ENCODE measurements at regions of chr5 and their contacts with region 1.

Region 1: DNA sequence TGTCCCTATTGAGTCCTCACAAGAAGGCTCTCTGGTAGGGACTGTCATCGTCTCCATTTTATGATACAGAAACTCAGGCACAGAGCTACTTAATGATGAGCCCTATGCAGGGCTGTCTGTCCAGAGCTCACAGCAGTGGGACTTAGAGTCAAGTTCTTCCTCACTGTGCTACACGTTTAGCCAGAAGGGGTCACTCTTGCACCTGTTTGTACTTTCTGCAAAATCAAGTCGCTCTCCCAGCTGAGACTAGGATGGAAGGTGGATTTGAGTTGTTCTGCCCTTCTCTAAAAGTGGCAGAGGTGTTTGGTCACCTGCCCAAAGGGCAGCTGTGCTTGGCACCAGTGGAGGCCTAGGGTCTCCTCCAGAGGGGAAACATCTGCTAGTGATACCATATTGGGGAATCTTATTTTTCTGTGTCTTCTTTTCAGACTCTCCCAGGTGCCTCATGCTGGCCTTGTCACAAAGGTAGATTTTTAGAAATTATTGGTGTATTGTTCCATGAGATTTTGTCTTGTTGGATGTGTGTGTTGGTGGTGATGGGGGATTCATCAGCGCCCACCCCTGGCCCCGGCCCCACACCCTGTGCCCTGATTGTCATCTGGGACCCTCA is 104.2 kb downstream of the PPARGC1B start:
- DNase-seq: no peak

Region 2: DNA sequence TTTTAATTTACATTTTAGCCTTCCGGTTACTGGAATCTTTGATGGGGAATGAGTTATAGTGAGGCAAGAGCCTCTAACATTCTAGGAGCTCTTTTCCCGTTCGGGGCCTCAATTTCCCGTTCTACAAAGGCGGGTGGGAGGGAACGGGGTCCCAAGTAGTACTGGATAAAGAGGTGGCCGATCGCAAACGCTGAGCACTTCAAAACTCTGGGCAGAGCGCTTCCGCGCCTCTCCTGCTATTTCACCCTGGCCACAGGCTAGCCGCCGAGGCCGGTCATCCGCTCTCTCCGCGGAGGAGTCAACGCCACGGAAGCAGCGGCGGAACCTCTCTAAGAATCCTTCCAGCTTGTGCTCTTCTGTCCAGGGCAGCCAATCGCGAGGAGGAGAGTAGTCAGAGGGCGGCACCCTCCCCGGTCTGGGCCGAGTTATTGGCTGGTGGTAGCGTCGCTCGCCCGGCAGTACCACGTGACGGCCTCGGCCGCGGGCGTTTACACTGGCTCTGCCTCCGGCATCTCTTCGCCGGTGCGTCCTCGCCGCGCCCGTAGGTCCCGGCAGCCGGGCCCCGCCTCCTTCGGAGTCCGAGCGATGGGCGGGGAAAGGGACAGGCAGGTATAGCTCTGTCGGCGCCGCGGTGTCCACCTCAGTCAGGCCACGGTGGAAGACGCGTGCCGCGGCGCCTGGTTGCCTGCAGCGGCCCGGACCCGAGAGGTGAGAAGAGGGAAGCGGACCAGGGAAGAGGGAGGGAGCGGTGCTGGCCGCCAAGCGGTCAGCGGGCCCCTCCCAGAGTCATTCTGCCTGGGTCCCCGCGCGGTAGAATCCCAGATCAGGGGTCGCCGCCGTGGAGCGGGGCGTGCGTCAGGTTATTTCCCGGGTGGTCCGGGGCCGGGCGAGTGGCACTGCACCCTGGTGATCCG is 126.2 kb after region 1 on chr5 and contains the start of gene SLC26A2:
- intact Hi-C with region 1: loop called (anchors 5 kb)
- DNase-seq: peak; percentile 99
- total RNA-seq, gene SLC26A2: 5.8 TPM

Region 3: GRCh38 chr5:149990518-149991376 is 156.4 kb after region 1 on chr5:
- intact Hi-C with region 1: loop called (anchors 2 kb)
- DNase-seq: no peak

Measured in cardiac septum (tissue), 1 donor.